ENCODE measurements at regions of chr15 and their contacts with region 1.

Region 1: DNA sequence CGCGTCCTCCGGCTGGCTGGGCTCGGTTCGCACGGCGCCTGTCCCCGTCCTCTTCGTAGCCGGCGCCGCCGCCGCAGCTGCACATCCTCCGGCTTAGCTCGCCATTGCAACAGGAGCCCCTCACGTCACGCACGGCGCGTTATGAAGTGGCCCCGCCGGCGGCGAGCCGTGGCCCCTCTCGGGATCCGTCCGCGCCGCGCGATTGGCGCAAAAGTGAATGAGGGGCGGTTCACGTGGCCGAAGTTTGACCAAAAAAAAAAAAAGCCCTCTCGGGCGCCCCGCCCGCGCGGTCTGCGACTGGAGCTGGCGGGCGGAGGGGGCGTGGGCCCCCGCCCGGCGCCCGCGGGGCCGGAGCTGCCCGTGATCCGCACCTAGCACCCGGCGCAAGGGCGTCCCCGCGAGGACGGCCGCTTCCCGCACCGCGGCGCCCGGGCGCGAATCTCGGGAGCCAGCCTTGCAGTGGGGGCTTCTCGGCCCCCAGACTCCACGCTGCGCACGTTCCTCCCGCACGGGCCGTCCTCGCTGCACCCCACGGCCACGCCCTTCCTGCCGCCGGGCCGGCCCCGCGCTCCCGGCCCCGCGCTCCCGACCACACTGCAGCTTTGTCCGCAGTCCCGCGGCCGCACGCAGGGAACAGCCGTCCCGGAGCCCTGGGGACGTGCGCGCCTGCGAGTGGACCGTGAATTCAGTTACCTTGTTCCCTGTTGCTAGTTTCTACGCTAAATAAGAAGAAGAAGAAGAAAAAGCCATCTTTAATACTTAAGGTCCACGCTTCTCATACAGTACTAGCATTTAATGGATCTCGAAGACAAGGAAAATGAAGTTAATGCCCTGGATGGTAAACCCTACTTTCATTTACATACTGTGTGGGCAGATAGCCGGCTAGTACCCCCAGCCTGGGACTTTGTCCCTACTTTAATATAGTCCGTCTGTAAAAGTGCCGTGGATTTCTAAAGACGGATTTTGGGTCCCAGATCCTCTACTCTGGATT is at the start of gene CHSY1:
- DNase-seq: peak; percentile 64 to 94 (median 86)
- ATAC-seq: peak; percentile 81
- H3K4me3 ChIP-seq: peak within 1 kb of the TSS; percentile 63 to 72
- H3K4me3 Mint-ChIP-seq: peak within 1 kb of the TSS; percentile 93
- H3K27ac ChIP-seq: peak within 1 kb of the TSS; percentile 35 to 48
- H3K27ac Mint-ChIP-seq: peak within 1 kb of the TSS; percentile 90
- H3K4me1 ChIP-seq: peaks cover 25% of the 10 kb centered on the region
- H3K4me1 Mint-ChIP-seq: peaks cover 41% of the 10 kb centered on the region
- H3K27me3 ChIP-seq: no peaks in the 10 kb centered on the region
- H3K27me3 Mint-ChIP-seq: no peaks in the 10 kb centered on the region
- CTCF ChIP-seq: no peak
- total RNA-seq, gene CHSY1: 15.4 to 15.6 TPM

Region 2: DNA sequence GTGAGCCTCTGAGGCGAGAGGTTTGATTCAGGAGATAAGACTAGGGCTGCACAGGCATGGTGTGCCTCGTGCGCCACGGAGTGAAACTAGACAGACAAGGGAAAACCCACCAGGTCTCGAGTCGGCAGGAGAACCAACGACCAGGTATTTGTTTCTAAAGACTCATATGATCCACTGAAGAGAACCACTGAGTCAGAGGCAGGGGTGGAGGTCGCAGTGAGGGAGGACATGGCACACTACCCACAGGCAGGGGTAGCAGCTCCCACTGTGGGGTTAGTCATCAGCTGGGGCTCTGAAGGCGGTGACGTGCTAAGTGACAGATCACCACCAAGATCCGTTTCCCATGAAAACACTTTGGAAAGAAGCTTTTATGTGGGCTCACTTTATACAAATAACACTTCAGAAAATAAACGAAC is 45.9 kb before region 1 on chr15:
- CTCF ChIA-PET with region 1: no interaction called
- POLR2A ChIA-PET with region 1: no interaction called
- intact Hi-C with region 1: loop called in 1 of 2 experiments (anchors 2 kb)
- DNase-seq: peak in 7 of 9 experiments; percentile 32 to 80 (median 62)
- ATAC-seq: peak; percentile 95
- H3K4me3 ChIP-seq: peak overlapping the region in 1 of 2 experiments; percentile 4
- H3K4me3 Mint-ChIP-seq: peak overlapping the region; percentile 66
- H3K27ac ChIP-seq: no peak overlapping the region
- H3K27ac Mint-ChIP-seq: peak overlapping the region; percentile 62
- H3K4me1 ChIP-seq: peaks cover 38% of the 10 kb centered on the region
- H3K4me1 Mint-ChIP-seq: peaks cover 75% of the 10 kb centered on the region
- H3K27me3 ChIP-seq: no peaks in the 10 kb centered on the region
- H3K27me3 Mint-ChIP-seq: no peaks in the 10 kb centered on the region
- CTCF ChIP-seq: no peak

Region 3: DNA sequence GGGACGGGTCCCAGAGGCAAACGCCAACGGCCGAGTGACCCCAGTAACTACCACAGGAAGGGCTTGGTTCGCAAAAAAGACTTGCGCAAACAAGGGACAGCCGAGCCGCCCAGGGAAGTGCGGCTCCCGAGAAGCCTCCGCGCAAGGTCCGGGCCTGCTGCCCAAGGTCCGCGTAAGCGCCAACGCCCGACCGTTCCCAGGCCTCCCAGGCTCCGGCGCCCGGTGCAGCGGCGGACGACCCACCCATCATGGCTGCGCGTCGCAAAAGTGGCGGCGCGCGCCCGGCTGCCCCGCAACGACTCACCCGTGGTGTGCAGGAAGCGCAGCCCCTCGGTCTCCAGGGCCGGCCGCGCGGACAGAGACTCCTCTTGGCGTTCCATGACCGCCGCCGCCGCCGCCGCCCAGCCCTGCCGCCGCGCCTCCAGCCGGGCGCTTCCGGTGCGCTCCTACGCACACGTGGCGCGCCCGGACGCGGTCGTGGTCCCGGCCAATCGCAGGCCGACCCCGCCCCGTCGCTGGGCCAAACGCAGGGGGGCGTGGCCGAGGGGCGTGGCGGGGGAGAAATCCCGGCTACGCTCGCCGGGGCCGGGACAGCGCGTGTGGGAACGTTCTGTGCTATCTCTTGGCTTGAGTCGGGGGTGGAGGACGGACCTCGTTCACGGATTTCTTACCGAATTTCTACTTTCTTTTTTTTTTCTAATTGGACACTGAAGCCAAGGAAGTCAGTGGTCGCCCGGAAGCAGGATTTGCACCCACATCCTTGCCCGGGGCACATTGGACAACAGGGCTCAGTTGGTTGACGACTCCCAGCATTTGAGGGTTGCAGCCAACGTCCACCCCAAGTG is 25.1 kb after region 1 on chr15 and contains the start of gene SELENOS:
- CTCF ChIA-PET with region 1: interaction called, 11 read pairs
- POLR2A ChIA-PET with region 1: interaction called, 4 read pairs
- intact Hi-C with region 1: loop called in 1 of 2 experiments (anchors 1 kb)
- DNase-seq: peak; percentile 62 to 94 (median 88)
- ATAC-seq: peak; percentile 93
- H3K4me3 ChIP-seq: peak within 1 kb of the TSS; percentile 75 to 77
- H3K4me3 Mint-ChIP-seq: peak within 1 kb of the TSS; percentile 95
- H3K27ac ChIP-seq: peak within 1 kb of the TSS; percentile 65 to 77
- H3K27ac Mint-ChIP-seq: peak within 1 kb of the TSS; percentile 93
- H3K4me1 ChIP-seq: peaks cover 16% of the 10 kb centered on the region
- H3K4me1 Mint-ChIP-seq: peaks cover 24% of the 10 kb centered on the region
- H3K27me3 ChIP-seq: no peaks in the 10 kb centered on the region
- H3K27me3 Mint-ChIP-seq: no peaks in the 10 kb centered on the region
- CTCF ChIP-seq: no peak
- total RNA-seq, gene SELENOS: 46.0 to 50.4 TPM